ENCODE measurements at regions of chr16 and their contacts with region 1.

Region 1: GRCh38 chr16:18789850-18790724 is at the start of gene RPS15A:
- DNase-seq: peak; percentile 88 to 97
- ATAC-seq: peak; percentile 98 to 100 (median 100)
- H3K4me3 ChIP-seq: peak within 1 kb of the TSS; percentile 73 to 97 (median 88)
- H3K27ac ChIP-seq: peak within 1 kb of the TSS in 9 of 10 donors; percentile 73 to 91 (median 84)
- H3K4me1 ChIP-seq: peaks cover 0 to 47% (median 41%) of the 10 kb centered on the region in 9 donors
- H3K27me3 ChIP-seq: no peaks in the 10 kb centered on the region
- CTCF ChIP-seq: peak in 1 of 9 donors; percentile 6
- total RNA-seq, gene RPS15A: 613 to 968 (median 724) TPM

Region 2: GRCh38 chr16:19067349-19068236 is 277.5 kb after region 1 on chr16 and contains the start of gene COQ7:
- intact Hi-C with region 1: loop called in 1 of 10 experiments (anchors 10 kb)
- DNase-seq: peak; percentile 97 to 99
- ATAC-seq: peak; percentile 96 to 98 (median 98)
- H3K4me3 ChIP-seq: peak within 1 kb of the TSS; percentile 60 to 93 (median 74)
- H3K27ac ChIP-seq: peak within 1 kb of the TSS; percentile 97 to 100 (median 99)
- H3K4me1 ChIP-seq: peaks cover 0 to 32% (median 18%) of the 10 kb centered on the region in 9 donors
- H3K27me3 ChIP-seq: no peaks in the 10 kb centered on the region
- CTCF ChIP-seq: peak in 1 of 9 donors; percentile 18
- total RNA-seq, gene COQ7: 37.0 to 52.9 (median 43.6) TPM

Measured in heart right ventricle (tissue), 16 donors.